ENCODE measurements at regions of chr15 and their contacts with region 1.

Region 1: GRCh38 chr15:63504247-63504978 is at the start of gene USP3:
- DNase-seq: peak; percentile 94
- H3K4me3 ChIP-seq: peak within 1 kb of the TSS; percentile 83 to 86
- H3K27ac ChIP-seq: peak within 1 kb of the TSS; percentile 87 to 96
- H3K4me1 ChIP-seq: peaks cover 30% of the 10 kb centered on the region
- H3K27me3 ChIP-seq: no peaks in the 10 kb centered on the region
- CTCF ChIP-seq: peak in 1 of 3 experiments; percentile 15
- POLR2A ChIP-seq: peak; percentile 57
- total RNA-seq, gene USP3: 38.5 to 43.1 TPM

Region 2: DNA sequence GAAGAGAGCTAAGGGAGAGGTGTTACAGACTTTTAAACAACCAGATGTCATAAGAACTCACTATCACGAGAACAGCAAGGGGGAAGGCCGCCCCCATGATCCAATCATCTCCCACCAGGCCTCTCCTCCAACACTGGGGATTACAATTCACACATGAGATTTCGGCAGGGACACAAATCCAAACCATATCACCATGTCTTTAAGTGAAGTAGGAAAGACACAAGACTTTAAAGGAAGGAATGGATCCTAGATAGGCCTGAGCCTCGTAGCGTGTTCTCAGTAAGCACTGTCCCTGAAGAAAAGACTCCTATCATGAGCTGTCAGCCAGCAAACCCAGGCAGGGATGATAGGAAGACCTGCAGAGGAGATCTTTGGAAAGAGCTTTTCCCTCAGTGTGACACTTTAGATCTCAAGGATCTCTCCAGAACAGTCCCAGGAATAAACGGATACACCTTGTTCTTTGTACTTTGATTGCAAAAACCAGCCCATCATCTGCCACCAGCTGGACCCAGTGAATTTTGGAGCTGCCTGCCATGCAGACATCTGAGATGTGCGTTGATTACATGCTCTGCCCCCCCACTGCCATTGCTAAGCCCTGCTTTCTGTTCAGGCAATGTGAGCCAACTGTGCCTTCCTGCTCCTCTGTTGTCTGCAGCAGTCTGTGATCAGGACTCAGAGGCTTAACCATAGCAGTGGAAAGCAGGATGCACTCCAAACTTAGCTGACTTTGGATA is 331.9 kb before region 1 on chr15:
- intact Hi-C with region 1: no loop called
- DNase-seq: no peak
- H3K4me3 ChIP-seq: no peak overlapping the region
- H3K27ac ChIP-seq: no peak overlapping the region
- H3K4me1 ChIP-seq: no peaks in the 10 kb centered on the region
- H3K27me3 ChIP-seq: no peaks in the 10 kb centered on the region
- CTCF ChIP-seq: no peak
- POLR2A ChIP-seq: no peak

Region 3: DNA sequence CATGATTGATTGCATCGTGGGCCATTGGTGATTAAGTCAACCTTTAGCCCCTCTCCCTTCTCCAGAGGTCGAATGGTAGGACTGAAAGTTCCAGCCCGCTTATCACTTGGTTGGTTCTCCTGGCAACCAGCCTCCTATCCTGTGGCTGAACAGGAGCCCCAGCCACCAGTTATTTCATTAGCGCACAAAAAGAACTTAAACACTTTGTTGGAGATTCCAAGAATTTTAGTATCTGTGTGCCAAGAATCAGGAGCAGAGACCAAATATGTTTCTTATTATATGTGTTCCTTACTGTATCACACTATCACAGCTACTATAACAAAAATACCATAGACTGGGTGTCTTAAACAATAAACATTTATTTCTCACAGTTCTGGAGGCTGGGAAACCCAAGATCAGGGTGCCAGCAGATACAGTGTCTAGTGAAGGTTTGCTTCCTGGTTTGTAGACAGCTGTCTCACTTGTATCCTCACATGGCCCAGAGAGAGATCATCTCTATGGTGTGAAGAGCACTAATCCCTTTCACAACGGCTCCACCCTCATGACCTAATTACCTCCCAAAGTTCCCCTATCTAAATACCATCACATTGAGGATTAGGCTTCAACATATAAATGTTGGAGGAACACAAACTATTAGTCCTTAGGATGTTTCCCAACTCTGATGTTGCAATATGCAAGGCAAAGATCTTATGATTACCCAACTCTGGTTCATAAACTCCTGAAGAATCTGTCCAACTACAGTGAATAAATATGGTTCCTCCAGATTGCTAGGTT is 257.5 kb before region 1 on chr15:
- intact Hi-C with region 1: no loop called
- DNase-seq: no peak
- H3K4me3 ChIP-seq: no peak overlapping the region
- H3K27ac ChIP-seq: no peak overlapping the region
- H3K4me1 ChIP-seq: no peaks in the 10 kb centered on the region
- H3K27me3 ChIP-seq: no peaks in the 10 kb centered on the region
- CTCF ChIP-seq: no peak
- POLR2A ChIP-seq: no peak

Region 4: DNA sequence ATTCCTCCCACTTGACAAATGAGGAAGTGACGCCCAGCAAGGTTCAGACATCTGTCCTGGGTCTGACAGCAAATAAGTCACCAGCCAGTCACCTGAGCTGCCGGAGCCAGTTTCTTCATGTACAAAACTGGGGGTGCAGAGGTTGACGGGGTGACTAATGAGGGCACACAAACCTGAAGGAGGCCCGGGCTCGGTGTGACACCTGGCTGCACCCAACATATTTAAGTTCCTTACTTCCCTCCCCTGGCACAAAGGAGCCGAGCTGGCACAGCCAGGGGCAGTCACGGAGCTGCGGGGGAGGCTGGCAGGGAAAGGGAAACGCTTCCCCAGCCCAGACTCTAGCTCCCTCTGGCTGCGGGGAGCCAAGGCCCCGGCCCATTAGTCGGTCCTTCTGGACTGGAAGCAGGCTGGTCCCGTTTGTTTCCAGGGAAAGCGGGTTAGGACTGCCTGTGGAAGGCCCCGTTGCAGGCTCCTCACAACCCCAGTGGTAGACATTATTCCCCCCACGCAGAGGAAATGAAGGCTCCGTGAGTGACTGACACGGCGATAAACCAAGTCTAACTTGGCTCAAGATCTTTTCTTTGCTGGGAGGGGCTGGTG is 95.1 kb after region 1 on chr15:
- intact Hi-C with region 1: loop called (anchors 5 kb)
- DNase-seq: peak; percentile 71
- H3K4me3 ChIP-seq: peak overlapping the region; percentile 60 to 66
- H3K27ac ChIP-seq: peak overlapping the region; percentile 53 to 89
- H3K4me1 ChIP-seq: peaks cover 38% of the 10 kb centered on the region
- H3K27me3 ChIP-seq: no peaks in the 10 kb centered on the region
- CTCF ChIP-seq: peak in 2 of 3 experiments; percentile 49 to 66
- POLR2A ChIP-seq: no peak